ENCODE measurements at regions of chr6 and their contacts with region 1.

Region 1: GRCh38 chr6:5559651-5560050 is 298.3 kb downstream of the FARS2 start:
- DNase-seq: no peak
- H3K4me3 ChIP-seq: no peak overlapping the region
- H3K27ac ChIP-seq: no peak overlapping the region
- H3K4me1 ChIP-seq: no peaks in the 10 kb centered on the region
- CTCF ChIP-seq: no peak

Region 2: GRCh38 chr6:5541751-5542432 is 17.8 kb before region 1 on chr6:
- CTCF ChIA-PET with region 1: no interaction called
- POLR2A ChIA-PET with region 1: no interaction called
- intact Hi-C with region 1: loop called (anchors 1 kb)
- DNase-seq: no peak
- H3K4me3 ChIP-seq: no peak overlapping the region
- H3K27ac ChIP-seq: no peak overlapping the region
- H3K4me1 ChIP-seq: no peaks in the 10 kb centered on the region
- CTCF ChIP-seq: no peak

Measured in OCI-LY7 (cell line).